ENCODE measurements at regions of chr11 and their contacts with region 1.

Region 1: DNA sequence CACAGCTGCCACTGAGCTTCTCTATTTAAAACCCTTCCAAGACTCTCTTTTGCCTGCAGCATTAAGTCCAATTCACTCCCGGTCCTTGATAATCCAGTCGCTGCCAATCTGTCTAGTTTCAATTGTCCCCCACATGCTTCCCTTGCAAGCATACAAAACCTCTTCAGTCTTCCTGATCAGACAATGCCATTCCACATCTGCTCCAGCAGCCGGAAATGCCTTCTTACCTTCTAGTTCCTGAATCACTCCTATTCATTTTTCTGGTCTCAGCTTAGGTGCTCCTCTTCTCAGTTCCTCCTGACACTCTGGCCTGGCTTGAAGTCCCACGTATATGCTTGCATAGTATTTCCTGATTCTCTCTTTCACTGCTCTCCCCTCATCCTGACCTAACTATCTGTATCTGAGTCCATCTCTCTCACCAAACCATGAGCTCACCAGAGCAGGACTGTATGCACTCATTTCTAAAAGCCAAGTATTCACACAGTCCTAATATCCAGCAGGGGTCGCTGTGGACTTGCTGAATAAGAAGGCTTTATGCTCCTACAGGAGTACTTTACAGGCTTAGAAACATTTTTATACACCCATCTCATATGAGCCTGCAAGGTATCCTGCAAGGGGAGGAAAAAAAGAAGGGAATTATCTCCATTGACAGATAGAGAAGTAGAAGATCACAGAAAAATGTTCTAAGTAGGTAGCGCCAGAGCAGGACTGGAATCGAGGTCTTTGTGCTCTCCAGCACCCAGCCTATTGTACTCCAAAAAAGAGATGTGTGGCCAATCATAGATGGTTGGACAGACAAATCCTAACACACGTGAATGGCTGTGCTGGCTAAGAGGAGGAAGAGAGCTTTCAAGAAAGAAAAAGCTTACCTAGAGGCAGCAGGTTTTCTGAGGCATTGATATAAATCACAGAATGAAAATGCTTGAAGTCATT is 19.2 kb downstream of the XRRA1 start:
- DNase-seq: peak; percentile 90
- H3K4me3 Mint-ChIP-seq: no peak overlapping the region
- H3K27ac Mint-ChIP-seq: no peak overlapping the region
- H3K4me1 Mint-ChIP-seq: peaks cover 26% of the 10 kb centered on the region
- H3K27me3 Mint-ChIP-seq: no peaks in the 10 kb centered on the region

Region 2: GRCh38 chr11:74988541-74989260 is 59.0 kb after region 1 on chr11 and contains the start of gene NEU3:
- intact Hi-C with region 1: loop called (anchors 5 kb)
- DNase-seq: peak; percentile 95
- H3K4me3 Mint-ChIP-seq: peak within 1 kb of the TSS; percentile 97
- H3K27ac Mint-ChIP-seq: peak within 1 kb of the TSS; percentile 87
- H3K4me1 Mint-ChIP-seq: peaks cover 27% of the 10 kb centered on the region
- H3K27me3 Mint-ChIP-seq: no peaks in the 10 kb centered on the region
- total RNA-seq, gene NEU3: 15.1 and 16.3 TPM in 2 replicates

Region 3: GRCh38 chr11:75142714-75143419 is 213.2 kb after region 1 on chr11:
- intact Hi-C with region 1: loop called (anchors 2 kb)
- DNase-seq: peak; percentile 93
- H3K4me3 Mint-ChIP-seq: peak overlapping the region; percentile 74
- H3K27ac Mint-ChIP-seq: peak overlapping the region; percentile 90
- H3K4me1 Mint-ChIP-seq: peaks cover 45% of the 10 kb centered on the region
- H3K27me3 Mint-ChIP-seq: peaks cover 9% of the 10 kb centered on the region

Region 4: DNA sequence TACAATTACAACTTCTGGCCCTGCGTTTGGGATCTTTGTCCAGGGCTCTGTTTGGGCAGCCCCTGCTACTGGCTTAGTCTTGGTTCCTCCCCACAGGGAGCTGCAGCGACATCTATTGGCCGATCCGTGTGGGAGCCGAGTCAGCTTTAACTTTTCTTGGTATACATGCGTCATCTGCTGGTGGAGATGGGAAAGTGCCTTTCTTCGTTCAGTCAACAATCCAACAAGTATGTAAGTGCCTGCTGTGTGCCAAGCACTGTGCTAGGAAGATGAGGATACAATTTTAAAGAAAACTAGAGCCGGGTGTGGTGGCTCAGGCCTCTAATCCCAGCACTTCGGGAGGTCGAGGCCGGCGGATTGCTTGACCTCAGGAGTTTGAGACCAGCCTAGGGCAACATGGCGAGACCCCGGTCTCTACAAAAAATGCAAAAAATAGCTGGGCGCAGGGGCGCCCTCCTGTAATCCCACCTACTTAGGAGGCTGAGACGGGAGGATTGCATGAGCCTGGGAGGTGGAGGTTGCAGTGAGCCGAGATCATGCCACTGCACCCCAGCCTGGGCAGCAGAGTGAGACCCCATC is 319.1 kb after region 1 on chr11:
- intact Hi-C with region 1: loop called (anchors 1 kb)
- DNase-seq: peak; percentile 96
- H3K4me3 Mint-ChIP-seq: no peak overlapping the region
- H3K27ac Mint-ChIP-seq: no peak overlapping the region
- H3K4me1 Mint-ChIP-seq: peaks cover 3% of the 10 kb centered on the region
- H3K27me3 Mint-ChIP-seq: peaks cover 31% of the 10 kb centered on the region

Region 5: DNA sequence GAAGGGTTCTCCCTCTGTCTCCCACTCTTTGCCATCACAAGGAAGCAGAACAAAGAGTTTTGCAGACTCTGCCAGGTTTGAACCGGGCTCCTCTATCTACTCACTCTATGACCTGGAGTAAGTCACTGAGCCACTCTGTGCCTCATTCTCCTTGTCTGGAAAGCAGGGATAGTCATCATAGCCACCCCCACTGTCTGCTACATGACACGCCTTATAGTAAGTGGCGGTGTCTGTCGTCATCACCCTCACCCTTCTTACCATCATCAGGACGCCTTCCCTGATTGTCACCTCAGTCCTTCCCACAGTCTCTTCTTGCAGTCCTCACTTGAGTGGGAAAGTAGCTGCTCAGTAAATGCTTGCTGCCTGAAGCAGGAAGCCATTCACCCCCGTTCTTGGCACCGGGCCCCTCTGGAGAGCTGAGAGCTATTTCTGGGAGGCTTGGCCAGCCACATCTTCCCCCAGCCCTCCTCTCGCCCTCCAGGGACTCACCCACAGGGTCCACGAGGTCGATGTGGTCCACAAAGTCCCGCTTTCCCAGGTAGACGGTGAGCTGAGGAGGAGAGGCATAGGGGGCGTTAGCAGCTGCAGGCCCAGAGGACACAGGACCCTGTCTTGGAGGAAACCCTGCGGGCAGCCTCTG is 357.2 kb after region 1 on chr11:
- intact Hi-C with region 1: no loop called
- DNase-seq: no peak
- H3K4me3 Mint-ChIP-seq: no peak overlapping the region
- H3K27ac Mint-ChIP-seq: no peak overlapping the region
- H3K4me1 Mint-ChIP-seq: no peaks in the 10 kb centered on the region
- H3K27me3 Mint-ChIP-seq: no peaks in the 10 kb centered on the region

Measured in activated CD4-positive, alpha-beta T cell treated with anti-CD3 and anti-CD28 coated beads, Interleukin-2, amount 10 ng/mL, durations not matched to agents 24 days and 14 days (primary cell).